Esophagus squamous epithelium (tissue), 5 donors: ENCODE measurements at regions of chr7 and their contacts with region 1.

Region 1: DNA sequence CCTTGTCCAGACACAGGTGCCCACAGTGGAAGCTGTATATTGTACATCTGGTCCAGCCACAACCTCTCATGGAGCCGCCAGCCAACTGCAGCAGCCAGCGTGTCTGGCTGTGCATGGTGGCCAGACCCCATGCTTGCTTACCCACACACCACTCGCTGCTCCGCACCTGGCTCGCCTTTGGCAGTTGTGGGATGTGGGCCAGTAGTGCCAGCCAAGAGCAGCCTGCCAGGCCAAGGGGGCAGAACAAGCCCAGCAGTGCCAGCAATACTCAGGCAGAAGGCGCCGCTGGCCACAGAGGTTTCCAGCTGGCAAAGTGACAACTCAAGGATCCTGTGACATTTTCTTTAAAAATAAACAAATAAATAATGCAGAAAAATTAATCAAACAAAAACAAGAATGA is 11.7 kb upstream of the TMEM243 start:
- DNase-seq: no peak
- H3K4me3 ChIP-seq: no peak overlapping the region
- H3K27ac ChIP-seq: no peak overlapping the region
- H3K4me1 ChIP-seq: peaks cover 0 to 10% (median 0%) of the 10 kb centered on the region in 3 donors
- H3K27me3 ChIP-seq: no peaks in the 10 kb centered on the region
- CTCF ChIP-seq: no peak
- POLR2A ChIP-seq: no peak

Region 2: GRCh38 chr7:86347327-86347726 is 883.9 kb before region 1 on chr7:
- intact Hi-C with region 1: no loop called
- DNase-seq: no peak
- H3K4me3 ChIP-seq: no peak overlapping the region
- H3K27ac ChIP-seq: no peak overlapping the region
- H3K4me1 ChIP-seq: no peaks in the 10 kb centered on the region
- H3K27me3 ChIP-seq: no peaks in the 10 kb centered on the region
- CTCF ChIP-seq: no peak
- POLR2A ChIP-seq: no peak

Region 3: GRCh38 chr7:86926732-86927131 is 304.5 kb before region 1 on chr7:
- intact Hi-C with region 1: loop called (anchors 10 kb)
- DNase-seq: no peak
- H3K4me3 ChIP-seq: no peak overlapping the region
- H3K27ac ChIP-seq: no peak overlapping the region
- H3K4me1 ChIP-seq: no peaks in the 10 kb centered on the region
- H3K27me3 ChIP-seq: no peaks in the 10 kb centered on the region
- CTCF ChIP-seq: peak; percentile 21 to 60 (median 41)
- POLR2A ChIP-seq: no peak

Region 4: DNA sequence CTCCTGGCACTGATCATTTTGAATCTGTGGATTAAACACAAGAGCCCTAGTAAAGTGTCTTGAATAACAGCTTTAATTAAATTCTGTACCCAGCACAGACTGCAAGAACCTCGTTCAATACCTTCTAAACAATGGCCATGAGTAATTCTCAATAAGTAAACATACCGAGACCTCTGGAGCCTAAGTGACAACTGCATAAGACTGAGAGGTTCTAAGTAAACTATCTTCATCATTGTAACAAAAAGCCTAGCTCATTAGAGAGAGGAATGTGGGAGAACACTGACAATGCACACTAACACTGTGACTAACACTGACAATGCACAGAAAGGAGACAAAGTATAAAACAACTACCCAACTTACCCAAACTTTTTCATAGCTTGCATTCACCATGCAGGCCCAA is 289.2 kb before region 1 on chr7:
- intact Hi-C with region 1: loop called (anchors 5 kb)
- DNase-seq: no peak
- H3K4me3 ChIP-seq: no peak overlapping the region
- H3K27ac ChIP-seq: no peak overlapping the region
- H3K4me1 ChIP-seq: no peaks in the 10 kb centered on the region
- H3K27me3 ChIP-seq: no peaks in the 10 kb centered on the region
- CTCF ChIP-seq: no peak
- POLR2A ChIP-seq: no peak